K562 (cell line): ENCODE measurements at regions of chr17 and their contacts with region 1.

Region 1: GRCh38 chr17:18141210-18141803 is 32.8 kb downstream of the MYO15A start:
- DNase-seq: peak in 3 of 4 experiments; percentile 31 to 63 (median 35)
- ATAC-seq: peak; percentile 45
- H3K4me3 ChIP-seq: no peak overlapping the region
- H3K27ac ChIP-seq: no peak overlapping the region
- H3K4me1 ChIP-seq: peaks cover 0 to 18% of the 10 kb centered on the region in 2 experiments; a peak in 3 of 5 replicates
- H3K27me3 ChIP-seq: no peaks in the 10 kb centered on the region
- CTCF ChIP-seq: peak; percentile 46 to 66 (median 52); a peak in 4 of 6 replicates
- EP300 ChIP-seq: no peak
- POLR2A ChIP-seq: no peak
- RAD21 ChIP-seq: peak; percentile 38 to 64; a peak in 3 of 4 replicates

Region 2: GRCh38 chr17:18187821-18188761 is 46.8 kb after region 1 on chr17:
- CTCF ChIA-PET with region 1: interaction called, 4 read pairs
- POLR2A ChIA-PET with region 1: interaction called, 6 read pairs
- in situ Hi-C with region 1: no loop called
- intact Hi-C with region 1: loop called (anchors 2 kb)
- DNase-seq: no peak
- ATAC-seq: no peak
- H3K4me3 ChIP-seq: peak overlapping the region; percentile 69; the same call in 1 of the 2 replicates
- H3K27ac ChIP-seq: no peak overlapping the region; the same call in 2 of the 3 replicates
- H3K4me1 ChIP-seq: peaks cover 26 to 28% of the 10 kb centered on the region in 2 experiments; a peak in 4 of 5 replicates
- H3K27me3 ChIP-seq: no peaks in the 10 kb centered on the region
- CTCF ChIP-seq: no peak
- EP300 ChIP-seq: no peak
- POLR2A ChIP-seq: no peak
- RAD21 ChIP-seq: no peak

Region 3: DNA sequence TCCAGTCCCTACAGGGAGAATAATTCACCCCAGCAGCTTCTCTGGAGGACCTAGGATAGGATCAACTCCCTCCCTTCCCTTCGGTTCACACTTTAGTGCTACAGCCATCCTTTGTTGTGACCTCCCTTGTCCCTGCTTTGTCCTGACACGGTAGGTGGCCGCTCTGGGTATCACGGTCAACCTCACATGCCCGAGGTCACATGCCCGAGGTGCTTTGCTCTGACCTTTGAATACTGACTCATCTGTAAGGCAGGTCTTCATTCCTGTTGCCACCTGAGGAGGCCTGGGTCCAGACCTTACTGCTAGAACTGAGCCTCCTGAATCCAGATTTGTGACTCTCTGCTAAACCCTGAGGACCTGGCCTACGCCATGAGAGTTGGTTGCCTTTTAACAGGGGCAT is 62.0 kb after region 1 on chr17:
- CTCF ChIA-PET with region 1: no interaction called
- POLR2A ChIA-PET with region 1: no interaction called
- in situ Hi-C with region 1: no loop called
- intact Hi-C with region 1: no loop called
- DNase-seq: no peak
- ATAC-seq: no peak
- H3K4me3 ChIP-seq: no peak overlapping the region
- H3K27ac ChIP-seq: no peak overlapping the region
- H3K4me1 ChIP-seq: no peaks in the 10 kb centered on the region; a peak in 1 of 5 replicates
- H3K27me3 ChIP-seq: no peaks in the 10 kb centered on the region
- CTCF ChIP-seq: no peak
- EP300 ChIP-seq: no peak
- POLR2A ChIP-seq: no peak
- RAD21 ChIP-seq: no peak

Region 4: DNA sequence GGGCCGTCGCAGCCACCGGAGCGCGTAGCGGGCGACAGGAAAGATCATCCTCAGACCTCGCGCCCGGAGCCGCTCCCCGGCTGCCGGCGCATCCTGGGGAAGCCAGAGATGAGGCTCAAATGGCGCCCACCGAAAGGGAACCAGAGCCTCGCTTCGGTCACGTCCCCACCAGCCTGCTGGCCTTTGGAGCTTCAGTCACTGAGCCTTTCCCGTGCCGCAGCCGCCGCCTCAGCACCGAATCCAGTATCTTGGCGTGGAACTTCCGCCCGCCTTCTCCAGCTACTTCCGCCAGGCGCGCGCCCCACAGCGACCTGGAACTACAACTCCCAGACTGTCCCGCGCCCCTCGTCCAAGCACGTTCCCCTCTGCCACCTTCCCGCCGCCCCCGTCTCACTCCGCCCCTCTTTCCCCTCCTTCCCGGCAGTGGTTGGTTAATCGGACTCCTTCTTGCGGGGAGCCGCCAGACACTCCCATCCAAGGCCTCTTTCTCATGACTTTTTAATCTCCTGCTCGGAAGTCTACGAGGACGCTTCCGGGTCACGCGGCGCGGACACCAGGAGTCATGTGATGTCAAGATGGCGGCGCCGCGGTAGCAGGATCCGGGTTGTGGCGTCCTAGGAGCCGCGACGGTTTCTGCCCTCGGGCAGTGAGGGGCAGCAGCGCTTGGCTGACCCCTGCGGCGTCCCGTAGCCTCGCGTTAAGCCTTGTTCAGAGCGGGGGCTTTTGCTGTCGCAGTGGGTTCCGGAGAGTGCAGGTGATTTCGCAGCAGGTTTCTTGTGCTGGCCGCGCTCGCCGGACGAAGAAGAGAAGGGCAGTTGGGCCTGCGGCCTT is 173.6 kb after region 1 on chr17 and contains the starts of genes SMCR8 and TOP3A:
- CTCF ChIA-PET with region 1: no interaction called
- POLR2A ChIA-PET with region 1: no interaction called
- in situ Hi-C with region 1: no loop called
- intact Hi-C with region 1: loop called (anchors 10 kb)
- DNase-seq: peak; percentile 75 to 95 (median 82)
- ATAC-seq: peak; percentile 95
- H3K4me3 ChIP-seq: peak within 1 kb of the TSS; percentile 75
- H3K27ac ChIP-seq: peak within 1 kb of the TSS; percentile 85
- H3K4me1 ChIP-seq: peaks cover 17 to 26% of the 10 kb centered on the region in 2 experiments
- H3K27me3 ChIP-seq: no peaks in the 10 kb centered on the region
- CTCF ChIP-seq: no peak
- EP300 ChIP-seq: no peak
- POLR2A ChIP-seq: peak; percentile 75
- RAD21 ChIP-seq: no peak
- polyA plus RNA-seq, gene SMCR8: 0.25 to 0.37 TPM
- polyA plus RNA-seq, gene TOP3A: 5.2 to 7.6 TPM